ENCODE measurements at regions of chr15 and their contacts with region 1.

Region 1: DNA sequence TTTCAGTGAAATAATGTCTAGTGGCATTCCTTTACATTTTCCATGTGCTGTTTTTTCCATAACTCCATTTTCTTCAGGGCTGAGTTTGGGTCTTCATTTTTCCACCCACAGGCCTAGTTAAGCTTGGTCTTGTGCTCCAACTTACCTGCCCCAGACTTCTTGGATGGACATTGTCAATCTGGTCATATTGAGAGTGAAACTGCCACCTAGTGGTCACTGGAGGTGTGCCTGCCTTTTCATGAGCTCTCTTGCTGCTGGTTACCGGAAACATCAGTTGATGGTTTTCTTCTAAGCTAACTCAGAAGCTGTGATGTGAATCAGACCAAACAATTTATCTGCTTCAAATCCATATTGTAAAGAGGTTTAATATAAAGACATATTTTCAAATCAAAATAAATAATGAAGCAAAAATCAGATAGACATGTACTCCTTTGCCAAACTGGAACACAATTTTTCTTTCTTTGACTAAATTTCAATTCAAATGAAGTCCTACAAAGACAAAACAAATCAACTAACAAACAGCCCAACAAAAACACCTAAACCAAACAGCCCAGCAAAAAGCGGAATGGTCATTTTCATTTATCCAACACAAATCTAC is 135.1 kb upstream of the RASGRP1 start:
- DNase-seq: peak; percentile 51 to 80
- ATAC-seq: peak; percentile 38

Region 2: DNA sequence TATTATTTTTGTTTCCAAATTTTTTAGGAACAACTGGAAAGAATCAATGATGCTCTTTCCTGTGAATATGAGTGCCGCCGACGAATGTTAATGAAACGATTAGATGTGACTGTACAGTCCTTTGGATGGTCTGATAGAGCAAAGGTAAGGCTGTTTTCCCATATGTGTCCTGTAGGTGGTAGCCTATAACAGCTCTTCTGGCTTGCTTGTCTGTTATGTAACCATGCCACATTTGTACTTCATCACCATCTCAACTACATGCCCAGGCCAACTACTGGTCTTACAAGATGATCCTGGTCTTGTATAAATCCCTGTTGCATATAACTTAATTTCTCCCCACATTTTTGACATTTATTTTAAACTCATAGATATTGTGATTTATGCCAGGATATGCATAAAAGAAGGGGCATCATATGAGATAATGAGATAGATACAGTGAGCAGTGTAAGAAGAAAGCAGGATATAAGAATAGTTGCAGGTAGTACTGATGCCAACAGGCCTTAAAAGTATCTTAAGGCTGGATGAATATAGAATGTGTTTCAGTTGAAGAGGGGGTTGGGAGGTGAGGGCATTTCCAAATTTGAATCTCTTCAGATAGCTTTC is 225.5 kb before region 1 on chr15:
- intact Hi-C with region 1: loop called in 1 of 2 experiments (anchors 10 kb)
- DNase-seq: no peak
- ATAC-seq: peak; percentile 100